Sigmoid colon (tissue), 7 donors: ENCODE measurements at regions of chr19 and their contacts with region 1.

Region 1: DNA sequence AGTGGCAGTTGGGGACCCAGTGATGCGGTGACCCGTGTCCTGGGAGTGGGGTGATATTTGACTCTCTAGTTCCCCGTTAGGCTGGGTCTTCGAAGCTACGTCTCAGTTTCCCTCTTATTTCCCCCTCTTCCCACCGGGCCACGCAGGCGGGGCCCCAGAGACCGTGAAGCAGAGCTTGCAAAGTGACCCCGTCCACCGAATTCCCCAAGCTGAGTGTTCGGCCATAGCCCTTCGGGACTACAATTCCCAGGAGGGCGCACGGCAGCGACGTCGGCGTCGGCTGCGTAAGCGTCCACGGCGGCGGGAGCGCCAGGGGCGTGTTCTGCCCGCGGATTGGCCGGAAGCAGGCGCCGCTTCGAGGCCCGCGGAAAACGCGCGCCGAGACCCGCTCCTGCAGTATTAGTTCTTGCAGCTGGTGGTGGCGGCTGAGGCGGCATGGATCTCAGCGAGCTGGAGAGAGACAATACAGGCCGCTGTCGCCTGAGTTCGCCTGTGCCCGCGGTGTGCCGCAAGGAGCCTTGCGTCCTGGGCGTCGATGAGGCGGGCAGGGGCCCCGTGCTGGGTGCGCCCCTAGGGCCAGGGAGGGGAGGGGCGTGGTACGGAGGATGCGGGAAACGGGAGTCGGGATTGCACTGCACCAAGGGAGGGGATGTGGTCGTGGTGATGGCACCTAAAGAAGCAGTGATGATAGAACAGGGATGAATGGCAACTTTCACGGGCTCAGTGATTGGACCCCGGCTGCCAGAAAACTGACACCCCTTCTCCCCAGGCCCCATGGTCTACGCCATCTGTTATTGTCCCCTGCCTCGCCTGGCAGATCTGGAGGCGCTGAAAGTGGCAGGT is at the start of gene RNASEH2A:
- DNase-seq: peak; percentile 94
- H3K4me3 ChIP-seq: peak within 1 kb of the TSS; percentile 30 to 62 (median 50)
- H3K27ac ChIP-seq: peak within 1 kb of the TSS; percentile 57 to 75 (median 74)
- H3K4me1 ChIP-seq: peaks cover 0 to 24% (median 17%) of the 10 kb centered on the region in 4 donors
- H3K27me3 ChIP-seq: no peaks in the 10 kb centered on the region
- CTCF ChIP-seq: peak in 2 of 4 experiments; percentile 22 to 29
- EP300 ChIP-seq: no peak
- POLR2A ChIP-seq: no peak
- total RNA-seq, gene RNASEH2A: 1.9 to 3.7 (median 3.0) TPM

Region 2: DNA sequence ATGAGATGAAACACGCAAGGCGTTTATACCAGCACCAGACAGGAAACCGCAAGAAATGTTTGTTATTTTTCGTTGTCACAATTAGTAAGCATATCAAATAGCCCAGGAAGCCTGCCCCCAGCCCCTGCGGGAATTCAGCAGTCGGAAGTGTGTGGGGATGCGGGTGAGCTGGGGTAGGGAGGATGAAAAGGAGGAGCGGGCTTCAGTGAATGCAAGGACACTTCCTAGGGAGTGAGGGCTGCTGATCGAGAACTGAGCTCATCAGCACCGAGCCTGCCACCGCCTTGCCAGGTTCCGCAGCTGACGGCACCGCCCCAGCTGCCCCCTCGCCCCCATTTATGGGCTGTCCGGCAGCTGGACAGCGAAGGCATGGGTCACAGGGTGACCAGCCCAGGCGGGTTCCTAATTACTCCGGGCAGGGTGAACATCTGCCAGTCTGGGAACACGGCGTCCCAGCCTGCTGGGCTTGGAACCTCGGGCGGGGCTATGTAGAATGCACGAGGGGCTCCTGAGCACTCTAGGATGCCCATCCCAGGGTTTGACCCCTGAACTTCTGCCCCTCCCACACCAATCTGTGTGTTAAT is 56.4 kb before region 1 on chr19:
- intact Hi-C with region 1: no loop called
- DNase-seq: no peak
- H3K4me3 ChIP-seq: no peak overlapping the region
- H3K27ac ChIP-seq: no peak overlapping the region
- H3K4me1 ChIP-seq: no peaks in the 10 kb centered on the region
- H3K27me3 ChIP-seq: peaks cover 0 to 27% (median 6%) of the 10 kb centered on the region in 3 donors
- CTCF ChIP-seq: no peak
- EP300 ChIP-seq: no peak
- POLR2A ChIP-seq: no peak

Region 3: GRCh38 chr19:12766051-12766521 is 40.4 kb before region 1 on chr19:
- intact Hi-C with region 1: loop called (anchors 5 kb)
- DNase-seq: peak; percentile 93
- H3K4me3 ChIP-seq: peak overlapping the region; percentile 25 to 54 (median 38)
- H3K27ac ChIP-seq: peak overlapping the region; percentile 55 to 80 (median 70)
- H3K4me1 ChIP-seq: peaks cover 0 to 10% (median 0%) of the 10 kb centered on the region in 4 donors
- H3K27me3 ChIP-seq: no peaks in the 10 kb centered on the region
- CTCF ChIP-seq: peak; percentile 58 to 95 (median 70)
- EP300 ChIP-seq: no peak
- POLR2A ChIP-seq: no peak

Region 4: GRCh38 chr19:12840091-12841079 is 33.9 kb after region 1 on chr19:
- intact Hi-C with region 1: no loop called
- DNase-seq: no peak
- H3K4me3 ChIP-seq: peak overlapping the region in 1 of 4 donors; percentile 15
- H3K27ac ChIP-seq: no peak overlapping the region
- H3K4me1 ChIP-seq: peaks cover 0 to 23% (median 17%) of the 10 kb centered on the region in 4 donors
- H3K27me3 ChIP-seq: peaks cover 60 to 93% (median 81%) of the 10 kb centered on the region in 3 donors
- CTCF ChIP-seq: no peak
- EP300 ChIP-seq: no peak
- POLR2A ChIP-seq: no peak